Activated CD4-positive, alpha-beta T cell treated with anti-CD3 and anti-CD28 coated beads for 36 hours (primary cell): ENCODE measurements at regions of chr7 and their contacts with region 1.

Region 1: DNA sequence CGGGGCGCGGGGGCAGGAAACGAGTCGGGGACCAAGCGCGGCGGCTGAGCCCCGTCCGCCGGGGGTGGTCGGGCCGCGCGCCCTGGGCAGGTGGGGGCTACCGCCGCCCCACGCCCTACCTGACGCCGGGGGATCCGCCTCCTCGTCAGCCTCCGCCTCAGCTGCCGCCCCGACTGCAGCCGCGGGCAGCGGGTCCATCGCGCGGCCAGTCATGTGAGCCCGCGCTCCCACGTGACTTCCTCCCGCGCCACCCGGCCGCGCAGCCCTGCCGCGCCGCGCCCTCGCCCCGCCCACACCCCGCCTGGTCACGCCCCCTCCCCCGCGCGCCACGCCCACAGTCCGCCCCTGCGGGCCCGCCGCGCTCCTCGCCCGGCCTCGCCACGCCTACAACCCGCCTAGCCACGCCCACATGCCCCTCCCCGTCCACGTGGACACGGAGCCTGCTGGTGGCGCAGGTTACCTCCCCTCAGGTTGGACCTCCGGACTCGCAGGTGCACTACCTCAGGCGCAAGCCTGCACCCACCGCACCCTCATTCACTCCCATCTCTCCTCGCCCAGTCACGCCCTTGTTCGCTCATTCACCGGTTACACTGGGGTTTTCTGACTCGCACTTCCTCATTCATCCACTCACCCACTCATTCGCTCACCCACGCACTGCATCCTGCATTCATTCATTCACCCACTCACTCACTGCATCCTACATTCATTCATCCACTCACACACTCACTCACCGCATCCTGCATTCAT is at the start of gene SNX8:
- DNase-seq: peak; percentile 97
- ATAC-seq: peak; percentile 89
- H3K4me3 Mint-ChIP-seq: no peak within 1 kb of the TSS
- H3K27ac Mint-ChIP-seq: peak within 1 kb of the TSS; percentile 62
- H3K4me1 Mint-ChIP-seq: peaks cover 8% of the 10 kb centered on the region
- H3K27me3 Mint-ChIP-seq: no peaks in the 10 kb centered on the region
- total RNA-seq, gene SNX8: 37.1 to 42.4 TPM

Region 2: GRCh38 chr7:1412322-1413261 is 901.8 kb before region 1 on chr7:
- CTCF ChIA-PET with region 1: no interaction called
- POLR2A ChIA-PET with region 1: no interaction called
- intact Hi-C with region 1: loop called in 1 of 2 experiments (anchors 1 kb)
- DNase-seq: peak; percentile 97
- ATAC-seq: peak; percentile 82
- H3K4me3 Mint-ChIP-seq: no peak overlapping the region
- H3K27ac Mint-ChIP-seq: no peak overlapping the region
- H3K4me1 Mint-ChIP-seq: peaks cover 14% of the 10 kb centered on the region
- H3K27me3 Mint-ChIP-seq: peaks cover 5% of the 10 kb centered on the region

Region 3: DNA sequence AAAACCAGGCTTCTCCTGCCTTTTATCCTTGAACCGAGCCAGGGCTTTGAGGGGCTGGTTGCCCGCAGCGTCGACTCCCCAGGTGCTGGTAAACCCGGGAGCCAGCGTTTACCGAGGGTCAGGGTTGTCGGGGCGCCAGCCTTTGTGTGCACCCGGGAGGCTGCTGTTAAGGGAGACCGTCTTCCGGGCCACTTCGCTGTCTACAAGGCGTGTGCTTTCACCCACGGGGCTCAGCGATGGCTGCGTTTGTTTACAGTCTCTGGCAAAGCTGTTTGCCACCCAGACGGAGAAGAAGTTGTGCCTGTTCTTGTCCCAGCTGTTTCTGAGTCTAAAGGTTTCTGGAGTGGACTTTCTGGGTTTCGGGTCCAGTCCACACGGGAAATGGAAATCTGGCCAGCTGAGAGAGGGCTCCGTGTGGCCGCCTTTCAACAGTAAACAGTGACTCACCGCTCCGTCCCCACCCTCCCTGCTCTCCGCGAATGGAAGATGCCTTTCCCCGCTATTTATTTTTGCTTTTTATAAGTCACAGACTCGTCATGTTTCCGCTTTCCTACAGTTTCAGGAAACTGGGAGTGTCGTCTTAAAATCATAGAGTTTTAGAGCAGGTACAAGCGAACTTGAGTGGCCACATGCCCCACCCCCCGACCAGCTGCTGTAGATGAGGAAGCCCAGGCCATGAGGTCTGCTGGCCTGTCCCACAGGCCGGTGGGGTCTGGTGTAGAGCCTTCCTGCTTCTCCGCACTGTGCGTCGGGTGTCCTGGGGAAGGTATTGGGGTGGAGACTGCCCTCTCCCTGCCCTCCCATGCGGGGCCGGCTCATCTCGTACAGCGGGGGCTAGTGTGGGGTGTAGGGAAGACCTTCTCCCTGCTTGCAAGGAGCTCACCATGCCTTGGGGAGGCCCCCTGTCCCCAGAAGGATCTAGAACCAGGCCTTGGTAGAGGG is 781.6 kb before region 1 on chr7:
- CTCF ChIA-PET with region 1: no interaction called
- POLR2A ChIA-PET with region 1: no interaction called
- intact Hi-C with region 1: loop called in 1 of 2 experiments (anchors 1 kb)
- DNase-seq: peak; percentile 78
- ATAC-seq: peak; percentile 65
- H3K4me3 Mint-ChIP-seq: peak overlapping the region; percentile 89
- H3K27ac Mint-ChIP-seq: peak overlapping the region; percentile 89
- H3K4me1 Mint-ChIP-seq: peaks cover 27% of the 10 kb centered on the region
- H3K27me3 Mint-ChIP-seq: no peaks in the 10 kb centered on the region

Region 4: DNA sequence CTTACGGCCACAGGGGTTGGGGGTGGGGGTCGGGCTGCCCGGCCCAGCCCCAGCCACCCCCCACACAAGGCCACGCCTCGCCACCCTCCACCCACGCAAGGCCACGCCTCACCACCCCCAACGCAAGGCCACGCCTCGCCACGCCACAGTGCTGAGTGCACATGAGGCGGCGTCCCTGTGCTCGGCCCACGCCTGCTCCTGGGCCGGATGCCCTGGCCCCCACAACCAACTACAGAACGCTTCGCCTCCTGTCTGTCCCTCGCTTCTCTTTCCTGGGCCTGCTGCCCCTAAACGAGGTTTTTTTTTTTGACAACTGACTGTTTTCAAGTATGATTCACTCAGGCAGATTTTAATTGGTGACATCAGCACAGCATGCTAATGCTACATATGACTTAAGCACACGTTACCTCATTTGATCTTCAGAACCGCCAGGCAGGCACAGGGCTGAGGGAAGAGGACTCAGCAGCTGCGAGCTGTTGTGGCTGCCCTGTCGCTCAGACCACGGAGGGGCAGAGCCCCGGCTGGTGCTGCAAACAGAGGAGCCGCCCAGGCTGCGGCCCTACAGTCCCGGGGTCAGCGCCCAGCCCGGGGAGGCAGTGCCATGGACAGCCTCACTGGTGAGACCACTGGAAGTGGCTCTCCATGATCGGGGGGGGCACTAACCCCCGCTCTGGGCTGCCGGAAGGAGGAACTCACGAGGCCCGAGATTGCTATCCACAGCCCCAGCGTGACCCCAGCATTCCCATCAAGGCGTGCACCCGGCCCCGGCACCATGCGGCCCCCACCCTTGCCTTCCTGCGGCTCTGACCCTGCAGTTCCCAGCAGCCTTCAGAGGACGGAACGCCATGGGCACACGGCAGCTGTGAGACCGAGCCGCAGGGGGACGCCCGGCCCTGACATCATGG is 294.5 kb before region 1 on chr7:
- CTCF ChIA-PET with region 1: no interaction called
- POLR2A ChIA-PET with region 1: no interaction called
- intact Hi-C with region 1: loop called in 1 of 2 experiments (anchors 1 kb)
- DNase-seq: peak; percentile 81
- ATAC-seq: peak; percentile 93
- H3K4me3 Mint-ChIP-seq: peak overlapping the region; percentile 45
- H3K27ac Mint-ChIP-seq: peak overlapping the region; percentile 86
- H3K4me1 Mint-ChIP-seq: peaks cover 25% of the 10 kb centered on the region
- H3K27me3 Mint-ChIP-seq: no peaks in the 10 kb centered on the region

Region 5: GRCh38 chr7:2403014-2403717 is 88.8 kb after region 1 on chr7 and contains the start of gene CHST12:
- CTCF ChIA-PET with region 1: no interaction called
- POLR2A ChIA-PET with region 1: no interaction called
- intact Hi-C with region 1: loop called in 1 of 2 experiments (anchors 1 kb)
- DNase-seq: peak; percentile 97
- ATAC-seq: peak; percentile 70
- H3K4me3 Mint-ChIP-seq: peak within 1 kb of the TSS; percentile 79
- H3K27ac Mint-ChIP-seq: no peak within 1 kb of the TSS
- H3K4me1 Mint-ChIP-seq: peaks cover 41% of the 10 kb centered on the region
- H3K27me3 Mint-ChIP-seq: peaks cover 6% of the 10 kb centered on the region
- total RNA-seq, gene CHST12: 1.8 to 1.9 TPM

Region 6: DNA sequence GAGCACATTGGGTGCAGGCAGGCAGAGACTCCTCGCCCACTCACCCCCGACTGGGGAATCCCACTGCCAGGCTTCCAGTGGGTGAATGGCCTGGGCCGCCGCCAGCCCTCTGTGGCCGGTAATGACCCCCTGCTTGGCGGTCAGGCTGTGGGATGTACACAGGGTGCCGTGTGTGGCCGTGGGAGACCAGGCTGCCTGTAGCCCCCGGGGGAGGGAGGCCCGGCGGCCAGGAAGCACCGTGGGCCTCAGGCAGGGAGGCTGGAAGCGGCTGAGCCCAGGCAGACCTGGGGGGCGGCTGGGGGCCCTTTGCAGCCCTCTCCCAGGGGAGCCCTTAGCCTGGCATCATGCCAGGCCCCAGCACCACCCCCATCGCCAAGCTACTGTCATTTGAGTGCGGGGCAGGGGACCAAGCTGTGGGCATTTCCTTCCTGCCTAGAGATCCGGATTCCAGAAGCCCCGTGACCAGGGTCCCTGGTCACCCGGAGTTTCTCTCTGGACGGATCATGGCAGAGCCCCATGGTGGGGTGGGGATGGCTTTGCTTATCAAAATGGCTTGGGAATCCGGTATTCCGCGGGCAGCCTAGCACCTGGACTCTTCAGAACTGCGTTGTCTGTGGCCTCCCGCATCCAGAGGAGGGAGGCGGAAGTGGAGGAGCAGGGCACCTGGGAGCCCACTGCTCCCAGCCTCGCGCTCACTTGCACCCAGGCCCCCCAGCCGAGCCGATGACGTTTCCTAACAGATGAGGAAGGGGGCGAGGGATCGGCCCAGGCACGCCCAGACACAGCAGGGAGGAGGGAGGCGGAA is 318.6 kb after region 1 on chr7:
- CTCF ChIA-PET with region 1: no interaction called
- POLR2A ChIA-PET with region 1: no interaction called
- intact Hi-C with region 1: loop called (anchors 1 to 5 kb)
- DNase-seq: peak; percentile 77
- ATAC-seq: peak; percentile 7
- H3K4me3 Mint-ChIP-seq: peak overlapping the region; percentile 91
- H3K27ac Mint-ChIP-seq: peak overlapping the region; percentile 84
- H3K4me1 Mint-ChIP-seq: peaks cover 14% of the 10 kb centered on the region
- H3K27me3 Mint-ChIP-seq: no peaks in the 10 kb centered on the region